AG04449 (cell line): ENCODE measurements at regions of chr2 and their contacts with region 1.

Region 1: DNA sequence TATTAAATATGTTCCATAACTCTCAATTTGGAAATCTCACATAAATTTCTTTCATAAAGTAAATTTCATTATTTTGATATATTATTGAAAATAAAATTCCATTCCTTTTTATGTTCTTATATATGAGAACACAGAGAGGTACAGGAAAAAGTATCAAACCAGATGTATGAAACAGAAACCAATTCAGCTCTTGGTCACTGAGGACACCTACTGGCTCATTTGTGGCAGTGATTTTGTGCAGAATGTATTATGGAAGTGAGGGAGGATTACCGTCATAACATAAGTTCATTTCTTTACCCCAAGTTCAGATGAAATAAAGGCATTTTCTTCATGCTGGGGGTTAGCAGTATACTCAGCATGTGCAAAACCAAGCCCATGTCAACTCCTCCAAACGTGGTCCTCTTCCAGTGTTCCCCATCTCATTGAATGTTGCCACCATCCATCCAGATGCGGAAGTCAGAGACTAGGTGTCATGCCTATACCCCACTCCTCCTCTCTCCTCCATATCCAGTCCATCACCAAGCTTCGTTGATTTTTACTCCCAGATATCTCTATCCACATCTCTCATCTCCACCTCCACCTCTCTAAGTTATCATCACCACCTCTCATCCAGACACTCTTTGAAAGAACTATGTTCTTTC is 41.7 kb upstream of the MALL start:
- DNase-seq: peak; percentile 33
- H3K4me3 ChIP-seq: no peak overlapping the region
- CTCF ChIP-seq: peak; percentile 73

Region 2: GRCh38 chr2:110095994-110096633 is 61.2 kb before region 1 on chr2:
- CTCF ChIA-PET with region 1: no interaction called
- POLR2A ChIA-PET with region 1: no interaction called
- DNase-seq: no peak
- H3K4me3 ChIP-seq: no peak overlapping the region
- CTCF ChIP-seq: no peak

Region 3: GRCh38 chr2:110143982-110144381 is 13.3 kb before region 1 on chr2:
- CTCF ChIA-PET with region 1: interaction called, 15 read pairs
- POLR2A ChIA-PET with region 1: interaction called, 3 read pairs
- DNase-seq: no peak
- H3K4me3 ChIP-seq: no peak overlapping the region
- CTCF ChIP-seq: no peak

Region 4: DNA sequence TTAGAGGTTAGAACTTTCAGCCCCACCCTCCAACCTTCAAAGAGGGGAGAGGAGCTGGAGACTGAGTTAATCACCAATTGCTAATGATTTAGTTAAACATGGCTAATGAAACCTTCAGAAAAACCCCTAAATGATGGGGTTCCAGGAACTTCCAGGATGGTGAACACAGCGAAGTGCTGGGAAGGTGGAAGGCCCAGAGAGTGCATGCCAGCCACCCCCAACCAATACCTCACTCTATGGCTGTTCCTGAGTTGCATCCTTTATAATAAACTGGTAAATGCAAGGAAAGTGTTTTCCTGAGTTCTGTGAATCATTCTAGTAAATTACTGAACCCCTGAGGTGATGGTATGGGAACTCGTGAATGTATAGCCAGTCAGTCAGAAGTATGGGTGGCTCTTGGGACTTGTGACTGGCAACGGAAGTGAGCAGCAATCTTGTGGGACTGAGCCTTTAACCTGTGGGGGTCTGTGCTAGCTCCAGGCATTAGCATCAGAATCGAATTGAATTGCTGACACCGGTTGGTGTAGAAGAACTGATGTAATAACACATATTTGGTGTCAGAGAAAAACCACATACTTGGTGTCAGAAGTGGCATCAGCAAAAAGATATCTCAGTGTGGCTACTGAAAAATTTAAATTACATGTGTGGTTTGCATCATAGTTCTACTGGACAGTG is 10.2 kb after region 1 on chr2:
- CTCF ChIA-PET with region 1: interaction called, 30 read pairs
- POLR2A ChIA-PET with region 1: no interaction called
- DNase-seq: no peak
- H3K4me3 ChIP-seq: no peak overlapping the region
- CTCF ChIP-seq: no peak